HepG2 (cell line): ENCODE measurements at regions of chr6 and their contacts with region 1.

Region 1: DNA sequence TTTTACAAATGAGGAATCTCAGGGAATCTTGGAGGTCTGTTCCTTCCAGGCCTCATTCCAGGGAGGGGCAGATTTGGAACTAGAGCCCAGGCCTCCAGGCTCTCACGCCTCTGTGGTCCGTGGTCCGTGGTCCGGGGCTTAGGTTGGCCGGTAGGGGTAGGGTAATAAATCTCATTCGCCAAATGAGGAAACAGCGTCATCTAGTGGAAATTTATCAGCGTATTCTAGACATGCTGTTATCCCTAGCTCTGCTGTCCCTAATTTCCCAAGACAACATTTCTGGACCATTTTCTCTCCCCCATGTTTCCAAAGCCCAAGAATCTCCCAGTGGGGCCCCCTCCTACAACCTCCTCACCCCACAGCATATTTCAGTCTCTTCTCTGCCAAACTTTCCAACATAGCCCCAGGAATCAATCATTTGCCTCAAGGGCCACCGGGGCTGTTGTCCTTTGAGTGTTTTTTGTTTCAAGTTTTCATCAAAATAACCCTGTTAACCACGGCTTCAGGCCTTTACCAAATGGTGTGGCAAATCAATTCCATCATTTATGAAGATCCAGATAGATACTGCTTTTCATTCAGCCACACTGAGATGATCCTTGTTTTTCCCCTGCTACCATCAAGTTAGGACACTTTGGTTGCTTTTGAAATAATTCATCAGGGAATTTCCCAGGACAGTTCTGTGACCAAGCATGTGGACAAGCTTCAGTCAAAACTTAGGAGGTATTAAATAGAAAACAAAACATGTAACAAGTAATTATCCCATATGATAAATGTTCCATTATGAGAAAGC is 126.8 kb downstream of the ALDH8A1 start:
- DNase-seq: peak; percentile 82
- ATAC-seq: peak; percentile 100
- H3K4me3 ChIP-seq: no peak overlapping the region
- H3K27ac ChIP-seq: no peak overlapping the region
- H3K4me1 ChIP-seq: no peaks in the 10 kb centered on the region
- H3K27me3 ChIP-seq: peaks cover 2 to 10% of the 10 kb centered on the region in 2 experiments; a peak in 2 of 5 replicates
- CTCF ChIP-seq: peak; percentile 86
- EP300 ChIP-seq: no peak
- POLR2A ChIP-seq: no peak
- RAD21 ChIP-seq: peak; percentile 97

Region 2: GRCh38 chr6:133923938-133924593 is 899.0 kb before region 1 on chr6:
- CTCF ChIA-PET with region 1: no interaction called
- POLR2A ChIA-PET with region 1: no interaction called
- in situ Hi-C with region 1: no loop called
- intact Hi-C with region 1: loop called (anchors 5 kb)
- DNase-seq: peak; percentile 81
- ATAC-seq: peak; percentile 98
- H3K4me3 ChIP-seq: no peak overlapping the region
- H3K27ac ChIP-seq: no peak overlapping the region
- H3K4me1 ChIP-seq: no peaks in the 10 kb centered on the region
- H3K27me3 ChIP-seq: no peaks in the 10 kb centered on the region
- CTCF ChIP-seq: peak; percentile 93
- EP300 ChIP-seq: no peak
- POLR2A ChIP-seq: no peak
- RAD21 ChIP-seq: peak; percentile 88

Region 3: DNA sequence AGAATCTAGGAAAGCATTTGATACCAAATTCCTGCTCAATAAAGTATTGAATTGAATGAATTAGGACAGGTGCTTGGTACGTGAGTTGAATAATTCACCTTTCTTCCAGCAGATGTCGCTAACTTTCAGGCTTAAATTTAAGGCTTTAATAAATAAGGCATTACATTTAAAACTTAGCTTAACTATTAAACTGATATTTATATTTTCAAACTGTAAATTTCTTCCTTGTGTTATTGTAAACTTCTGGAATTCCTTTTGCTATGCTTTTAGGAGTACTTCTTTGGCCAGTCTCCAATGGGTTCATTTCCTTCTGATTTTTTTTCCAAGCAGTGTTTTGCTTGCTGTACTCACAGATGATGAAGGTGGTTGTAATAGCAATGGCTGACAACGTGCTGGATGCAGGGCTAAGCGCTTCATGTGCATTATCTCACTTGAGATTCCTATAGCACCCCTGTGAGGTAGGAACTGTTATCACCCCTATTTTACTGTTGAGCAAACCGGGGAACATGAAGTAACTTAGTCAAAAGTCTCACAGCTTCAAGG is 699.4 kb before region 1 on chr6:
- CTCF ChIA-PET with region 1: interaction called, 43 read pairs
- POLR2A ChIA-PET with region 1: no interaction called
- in situ Hi-C with region 1: loop called (anchors 10 kb)
- intact Hi-C with region 1: loop called (anchors 1 kb)
- DNase-seq: peak; percentile 53
- ATAC-seq: peak; percentile 83
- H3K4me3 ChIP-seq: no peak overlapping the region
- H3K27ac ChIP-seq: no peak overlapping the region
- H3K4me1 ChIP-seq: no peaks in the 10 kb centered on the region
- H3K27me3 ChIP-seq: no peaks in the 10 kb centered on the region
- CTCF ChIP-seq: peak; percentile 59
- EP300 ChIP-seq: no peak
- POLR2A ChIP-seq: no peak
- RAD21 ChIP-seq: no peak

Region 4: GRCh38 chr6:134640975-134641429 is 182.1 kb before region 1 on chr6:
- CTCF ChIA-PET with region 1: interaction called, 12 read pairs
- POLR2A ChIA-PET with region 1: no interaction called
- in situ Hi-C with region 1: no loop called
- intact Hi-C with region 1: loop called (anchors 1 kb)
- DNase-seq: peak; percentile 79
- ATAC-seq: peak; percentile 96
- H3K4me3 ChIP-seq: no peak overlapping the region
- H3K27ac ChIP-seq: no peak overlapping the region
- H3K4me1 ChIP-seq: 0 out of 2 replicates have a peak, but pooled peaks cover 4% of the 10 kb centered on the region
- H3K27me3 ChIP-seq: no peaks in the 10 kb centered on the region; a peak in 1 of 5 replicates
- CTCF ChIP-seq: peak; percentile 94
- EP300 ChIP-seq: no peak
- POLR2A ChIP-seq: no peak
- RAD21 ChIP-seq: peak; percentile 85; the same call in 1 of the 2 replicates

Region 5: DNA sequence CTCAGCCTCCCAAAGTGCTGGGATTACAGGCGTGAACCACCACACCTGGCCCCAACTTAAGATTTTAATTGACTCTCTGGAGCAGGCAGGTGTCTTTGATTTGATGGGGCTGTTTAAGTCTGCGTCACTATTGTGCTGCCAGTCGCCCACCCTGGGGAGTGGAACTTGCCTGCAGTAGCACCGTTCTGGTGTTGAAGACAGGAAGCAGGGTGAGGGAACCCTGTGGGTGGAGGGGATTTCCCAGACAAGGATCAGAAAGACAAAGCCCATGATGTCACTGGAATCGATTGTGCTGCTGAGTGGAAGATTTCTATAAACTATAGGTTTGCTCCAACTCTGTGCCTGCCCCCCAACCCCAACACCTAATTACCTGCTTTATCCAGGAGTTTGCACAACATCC is 115.8 kb after region 1 on chr6:
- CTCF ChIA-PET with region 1: interaction called, 4 read pairs
- POLR2A ChIA-PET with region 1: no interaction called
- in situ Hi-C with region 1: no loop called
- intact Hi-C with region 1: loop called (anchors 2 kb)
- DNase-seq: no peak
- ATAC-seq: no peak
- H3K4me3 ChIP-seq: no peak overlapping the region
- H3K27ac ChIP-seq: no peak overlapping the region
- H3K4me1 ChIP-seq: peaks cover 6% of the 10 kb centered on the region
- H3K27me3 ChIP-seq: no peaks in the 10 kb centered on the region
- CTCF ChIP-seq: no peak
- EP300 ChIP-seq: no peak
- POLR2A ChIP-seq: no peak
- RAD21 ChIP-seq: no peak

Region 6: DNA sequence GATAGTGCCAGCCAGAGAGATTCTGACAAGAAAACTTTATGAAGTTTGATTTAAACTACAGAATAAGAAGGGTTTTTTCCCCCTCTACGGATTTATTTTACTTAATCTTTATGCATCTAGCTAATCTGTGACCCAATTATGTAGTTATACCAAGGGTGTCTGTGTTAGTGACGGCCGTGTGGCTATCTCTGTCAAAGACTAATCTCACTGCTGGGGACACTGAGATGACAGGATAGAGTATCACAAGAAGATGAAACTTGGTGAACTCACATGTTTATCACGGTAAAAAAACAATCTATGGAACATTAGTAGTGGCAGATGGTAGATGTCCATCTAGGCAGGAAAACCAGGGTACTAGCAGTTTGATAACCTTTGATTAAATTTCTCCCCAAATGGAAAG is 524.8 kb after region 1 on chr6:
- CTCF ChIA-PET with region 1: no interaction called
- POLR2A ChIA-PET with region 1: no interaction called
- in situ Hi-C with region 1: no loop called
- intact Hi-C with region 1: no loop called
- DNase-seq: no peak
- ATAC-seq: no peak
- H3K4me3 ChIP-seq: no peak overlapping the region
- H3K27ac ChIP-seq: no peak overlapping the region
- H3K4me1 ChIP-seq: no peaks in the 10 kb centered on the region
- H3K27me3 ChIP-seq: no peaks in the 10 kb centered on the region
- CTCF ChIP-seq: no peak
- EP300 ChIP-seq: no peak
- POLR2A ChIP-seq: no peak
- RAD21 ChIP-seq: no peak